Vagina (tissue), 2 donors: ENCODE measurements at regions of chr3 and their contacts with region 1.

Region 1: DNA sequence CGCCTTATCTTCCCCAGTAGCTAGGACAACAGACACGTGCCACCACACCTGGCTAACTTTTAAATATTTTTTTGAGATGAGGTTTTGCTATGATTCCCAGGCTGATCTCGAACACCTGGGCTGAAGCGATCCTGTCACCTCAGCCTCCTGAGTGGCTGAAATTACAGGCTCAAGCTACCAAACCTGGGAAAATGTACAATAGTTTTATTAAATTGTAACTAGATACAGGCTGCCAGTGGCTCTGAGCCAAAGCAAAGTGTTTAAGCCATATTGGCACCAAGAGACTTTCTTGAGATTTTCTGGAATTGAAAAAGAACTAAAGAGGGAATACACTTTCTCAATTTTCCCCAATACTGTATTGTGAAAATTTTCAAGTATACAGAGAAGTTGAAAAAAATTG is 204.3 kb downstream of the SUCLG2 start:
- DNase-seq: no peak
- H3K4me3 ChIP-seq: no peak overlapping the region
- H3K27ac ChIP-seq: no peak overlapping the region
- H3K4me1 ChIP-seq: no peaks in the 10 kb centered on the region
- H3K27me3 ChIP-seq: no peaks in the 10 kb centered on the region
- CTCF ChIP-seq: no peak
- POLR2A ChIP-seq: no peak

Region 2: GRCh38 chr3:67421912-67422311 is 28.2 kb before region 1 on chr3:
- intact Hi-C with region 1: loop called (anchors 1 kb)
- DNase-seq: no peak
- H3K4me3 ChIP-seq: no peak overlapping the region
- H3K27ac ChIP-seq: no peak overlapping the region
- H3K4me1 ChIP-seq: no peaks in the 10 kb centered on the region
- H3K27me3 ChIP-seq: no peaks in the 10 kb centered on the region
- CTCF ChIP-seq: no peak
- POLR2A ChIP-seq: no peak